Caco-2 (cell line): ENCODE measurements at regions of chr19 and their contacts with region 1.

Region 1: DNA sequence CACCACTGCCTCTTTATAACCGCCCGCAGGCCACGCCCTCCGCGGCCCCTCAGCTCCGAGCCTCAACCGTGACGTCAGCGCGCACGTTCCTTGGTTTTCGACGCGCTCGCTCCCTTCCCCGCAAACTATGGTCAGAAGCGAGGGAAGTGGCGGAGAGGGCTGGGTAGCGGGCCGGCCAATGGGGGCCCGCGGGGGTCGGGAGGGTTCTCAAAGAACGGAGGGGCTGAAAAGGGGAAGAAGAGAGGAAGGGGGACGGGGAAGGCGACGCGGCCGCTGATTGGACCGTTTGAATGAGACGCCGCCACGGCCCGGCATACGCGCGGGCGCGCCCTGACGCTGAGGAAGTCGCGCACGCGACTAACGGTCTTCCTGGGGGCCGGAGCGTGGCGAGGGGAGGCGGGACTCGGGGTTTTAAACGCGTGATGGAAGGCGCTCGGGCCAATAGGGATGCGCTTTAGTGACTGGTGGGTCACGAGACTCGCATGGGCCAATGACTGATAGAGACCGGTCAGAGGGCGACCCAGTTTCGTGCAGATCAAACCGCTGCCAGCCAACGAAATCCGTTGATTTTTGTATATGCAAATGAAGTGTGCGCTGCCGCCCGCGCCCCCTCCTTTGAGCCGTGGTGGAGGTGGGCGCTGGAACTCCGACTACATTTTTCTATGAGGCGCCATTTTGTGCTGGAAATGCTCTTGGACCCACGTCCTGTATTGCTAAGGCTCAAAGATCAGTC is 378 bp upstream of the UBE2S start:
- DNase-seq: peak; percentile 99
- H3K4me3 ChIP-seq: peak overlapping the region; percentile 94
- H3K4me3 Mint-ChIP-seq: peak overlapping the region; percentile 93
- H3K27ac Mint-ChIP-seq: peak overlapping the region; percentile 99
- H3K4me1 ChIP-seq: peaks cover 18% of the 10 kb centered on the region
- H3K4me1 Mint-ChIP-seq: peaks cover 14% of the 10 kb centered on the region
- H3K27me3 ChIP-seq: no peaks in the 10 kb centered on the region
- H3K27me3 Mint-ChIP-seq: peaks cover 6% of the 10 kb centered on the region
- CTCF ChIP-seq: no peak

Region 2: GRCh38 chr19:55258828-55259539 is 149.0 kb before region 1 on chr19 and contains the start of gene PPP6R1:
- CTCF ChIA-PET with region 1: no interaction called
- POLR2A ChIA-PET with region 1: interaction called, 9 read pairs
- intact Hi-C with region 1: loop called (anchors 1 kb)
- DNase-seq: peak; percentile 98 to 99
- H3K4me3 ChIP-seq: peak within 1 kb of the TSS; percentile 85
- H3K4me3 Mint-ChIP-seq: peak within 1 kb of the TSS; percentile 94
- H3K27ac Mint-ChIP-seq: peak within 1 kb of the TSS; percentile 81
- H3K4me1 ChIP-seq: peaks cover 23% of the 10 kb centered on the region; the same call in 1 of the 2 replicates
- H3K4me1 Mint-ChIP-seq: peaks cover 23% of the 10 kb centered on the region
- H3K27me3 ChIP-seq: no peaks in the 10 kb centered on the region
- H3K27me3 Mint-ChIP-seq: no peaks in the 10 kb centered on the region
- CTCF ChIP-seq: no peak
- total RNA-seq, gene PPP6R1: 113 and 118 TPM in 2 replicates

Region 3: GRCh38 chr19:55312621-55313512 is 95.1 kb before region 1 on chr19:
- CTCF ChIA-PET with region 1: no interaction called
- POLR2A ChIA-PET with region 1: interaction called, 11 read pairs
- intact Hi-C with region 1: no loop called
- DNase-seq: no peak
- H3K4me3 ChIP-seq: no peak overlapping the region
- H3K4me3 Mint-ChIP-seq: no peak overlapping the region
- H3K27ac Mint-ChIP-seq: no peak overlapping the region
- H3K4me1 ChIP-seq: no peaks in the 10 kb centered on the region
- H3K4me1 Mint-ChIP-seq: peaks cover 6% of the 10 kb centered on the region
- H3K27me3 ChIP-seq: no peaks in the 10 kb centered on the region
- H3K27me3 Mint-ChIP-seq: no peaks in the 10 kb centered on the region
- CTCF ChIP-seq: no peak

Region 4: GRCh38 chr19:55452749-55453346 is 44.9 kb after region 1 on chr19:
- CTCF ChIA-PET with region 1: no interaction called
- POLR2A ChIA-PET with region 1: interaction called, 17 read pairs
- intact Hi-C with region 1: no loop called
- DNase-seq: peak; percentile 73 to 83
- H3K4me3 ChIP-seq: no peak overlapping the region
- H3K4me3 Mint-ChIP-seq: peak overlapping the region; percentile 39
- H3K27ac Mint-ChIP-seq: no peak overlapping the region
- H3K4me1 ChIP-seq: peaks cover 18% of the 10 kb centered on the region; the same call in 1 of the 2 replicates
- H3K4me1 Mint-ChIP-seq: peaks cover 15% of the 10 kb centered on the region
- H3K27me3 ChIP-seq: peaks cover 2% of the 10 kb centered on the region; the same call in 1 of the 2 replicates
- H3K27me3 Mint-ChIP-seq: peaks cover 19% of the 10 kb centered on the region
- CTCF ChIP-seq: no peak

Region 5: DNA sequence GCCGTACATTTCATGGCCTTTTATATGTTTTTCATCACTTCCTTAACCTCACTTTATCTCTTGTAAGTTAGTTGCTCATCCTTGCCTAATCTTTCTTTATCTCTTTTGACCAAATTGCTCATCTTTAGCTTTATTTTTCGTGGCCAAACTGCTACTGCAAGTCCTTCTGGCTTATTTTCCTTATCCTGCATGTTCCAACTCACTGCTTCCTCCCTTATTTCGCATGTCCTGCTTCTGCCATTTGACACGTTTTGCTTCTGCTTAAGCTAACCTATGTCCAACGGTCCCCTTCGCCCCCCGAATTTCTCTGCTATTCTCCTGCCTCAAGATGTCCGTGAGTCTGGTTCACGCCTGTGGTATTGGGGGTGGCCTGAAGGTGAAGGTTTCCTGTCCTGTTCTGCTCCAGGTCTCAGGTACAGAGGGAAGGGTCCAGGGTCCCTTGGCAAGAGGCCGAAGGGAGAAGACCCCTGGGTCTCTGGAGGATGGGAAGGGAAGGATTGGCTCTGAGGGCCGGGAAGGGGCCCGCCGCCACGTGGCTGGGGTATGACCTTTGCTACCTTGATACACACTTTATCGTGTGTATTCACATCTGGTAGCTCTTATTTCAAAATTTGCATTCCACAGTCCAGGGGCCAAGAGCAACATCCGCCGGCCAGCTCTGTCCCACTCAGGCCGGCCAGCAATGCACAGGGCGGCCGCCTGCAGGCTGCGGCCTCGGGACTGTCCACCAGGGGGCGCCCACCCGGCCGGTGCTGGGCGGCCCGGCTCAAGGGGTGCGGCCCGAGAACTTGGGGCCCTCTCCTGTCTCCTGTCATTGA is 59.5 kb after region 1 on chr19:
- CTCF ChIA-PET with region 1: no interaction called
- POLR2A ChIA-PET with region 1: no interaction called
- intact Hi-C with region 1: no loop called
- DNase-seq: peak in 1 of 2 experiments; percentile 83
- H3K4me3 ChIP-seq: no peak overlapping the region
- H3K4me3 Mint-ChIP-seq: no peak overlapping the region
- H3K27ac Mint-ChIP-seq: no peak overlapping the region
- H3K4me1 ChIP-seq: no peaks in the 10 kb centered on the region
- H3K4me1 Mint-ChIP-seq: peaks cover 11% of the 10 kb centered on the region
- H3K27me3 ChIP-seq: no peaks in the 10 kb centered on the region
- H3K27me3 Mint-ChIP-seq: peaks cover 7% of the 10 kb centered on the region
- CTCF ChIP-seq: peak; percentile 82 to 97

Region 6: GRCh38 chr19:55586976-55587668 is 179.2 kb after region 1 on chr19:
- CTCF ChIA-PET with region 1: no interaction called
- POLR2A ChIA-PET with region 1: no interaction called
- intact Hi-C with region 1: no loop called
- DNase-seq: peak; percentile 98
- H3K4me3 ChIP-seq: peak overlapping the region; percentile 42
- H3K4me3 Mint-ChIP-seq: peak overlapping the region; percentile 75
- H3K27ac Mint-ChIP-seq: peak overlapping the region; percentile 81
- H3K4me1 ChIP-seq: peaks cover 11% of the 10 kb centered on the region
- H3K4me1 Mint-ChIP-seq: peaks cover 16% of the 10 kb centered on the region
- H3K27me3 ChIP-seq: no peaks in the 10 kb centered on the region
- H3K27me3 Mint-ChIP-seq: no peaks in the 10 kb centered on the region
- CTCF ChIP-seq: no peak

Region 7: GRCh38 chr19:55599468-55600279 is 191.7 kb after region 1 on chr19 and contains the start of gene FIZ1:
- CTCF ChIA-PET with region 1: no interaction called
- POLR2A ChIA-PET with region 1: interaction called, 10 read pairs
- intact Hi-C with region 1: no loop called
- DNase-seq: peak; percentile 99
- H3K4me3 ChIP-seq: peak within 1 kb of the TSS; percentile 70
- H3K4me3 Mint-ChIP-seq: peak within 1 kb of the TSS; percentile 87
- H3K27ac Mint-ChIP-seq: peak within 1 kb of the TSS; percentile 98
- H3K4me1 ChIP-seq: peaks cover 5% of the 10 kb centered on the region
- H3K4me1 Mint-ChIP-seq: peaks cover 14% of the 10 kb centered on the region
- H3K27me3 ChIP-seq: no peaks in the 10 kb centered on the region
- H3K27me3 Mint-ChIP-seq: no peaks in the 10 kb centered on the region
- CTCF ChIP-seq: no peak
- total RNA-seq, gene FIZ1: 27.2 and 27.7 TPM in 2 replicates